ENCODE measurements at regions of chr10 and their contacts with region 1.

Region 1: GRCh38 chr10:49187950-49188761 is at the start of gene TMEM273:
- DNase-seq: peak in 1 of 2 donors; percentile 61
- ATAC-seq: peak; percentile 48 to 70 (median 67)
- H3K4me3 ChIP-seq: peak within 1 kb of the TSS; percentile 15
- H3K4me3 Mint-ChIP-seq: peak within 1 kb of the TSS; percentile 83
- H3K27ac ChIP-seq: peak within 1 kb of the TSS; percentile 44
- H3K27ac Mint-ChIP-seq: peak within 1 kb of the TSS; percentile 72 to 80
- H3K4me1 ChIP-seq: peaks cover 55% of the 10 kb centered on the region
- H3K4me1 Mint-ChIP-seq: peaks cover 70 to 75% of the 10 kb centered on the region in 2 donors
- H3K27me3 ChIP-seq: no peaks in the 10 kb centered on the region
- H3K27me3 Mint-ChIP-seq: no peaks in the 10 kb centered on the region
- CTCF ChIP-seq: no peak
- total RNA-seq, gene TMEM273: 11.6 to 46.3 (median 29.4) TPM

Region 2: GRCh38 chr10:49254556-49255318 is 66.6 kb after region 1 on chr10:
- intact Hi-C with region 1: loop called (anchors 5 kb)
- DNase-seq: peak; percentile 52 to 68
- ATAC-seq: peak; percentile 87 to 95 (median 94)
- H3K4me3 ChIP-seq: no peak overlapping the region
- H3K4me3 Mint-ChIP-seq: no peak overlapping the region
- H3K27ac ChIP-seq: peak overlapping the region; percentile 46
- H3K27ac Mint-ChIP-seq: no peak overlapping the region
- H3K4me1 ChIP-seq: peaks cover 39% of the 10 kb centered on the region
- H3K4me1 Mint-ChIP-seq: peaks cover 5 to 14% of the 10 kb centered on the region in 2 donors
- H3K27me3 ChIP-seq: no peaks in the 10 kb centered on the region
- H3K27me3 Mint-ChIP-seq: no peaks in the 10 kb centered on the region
- CTCF ChIP-seq: no peak

Region 3: DNA sequence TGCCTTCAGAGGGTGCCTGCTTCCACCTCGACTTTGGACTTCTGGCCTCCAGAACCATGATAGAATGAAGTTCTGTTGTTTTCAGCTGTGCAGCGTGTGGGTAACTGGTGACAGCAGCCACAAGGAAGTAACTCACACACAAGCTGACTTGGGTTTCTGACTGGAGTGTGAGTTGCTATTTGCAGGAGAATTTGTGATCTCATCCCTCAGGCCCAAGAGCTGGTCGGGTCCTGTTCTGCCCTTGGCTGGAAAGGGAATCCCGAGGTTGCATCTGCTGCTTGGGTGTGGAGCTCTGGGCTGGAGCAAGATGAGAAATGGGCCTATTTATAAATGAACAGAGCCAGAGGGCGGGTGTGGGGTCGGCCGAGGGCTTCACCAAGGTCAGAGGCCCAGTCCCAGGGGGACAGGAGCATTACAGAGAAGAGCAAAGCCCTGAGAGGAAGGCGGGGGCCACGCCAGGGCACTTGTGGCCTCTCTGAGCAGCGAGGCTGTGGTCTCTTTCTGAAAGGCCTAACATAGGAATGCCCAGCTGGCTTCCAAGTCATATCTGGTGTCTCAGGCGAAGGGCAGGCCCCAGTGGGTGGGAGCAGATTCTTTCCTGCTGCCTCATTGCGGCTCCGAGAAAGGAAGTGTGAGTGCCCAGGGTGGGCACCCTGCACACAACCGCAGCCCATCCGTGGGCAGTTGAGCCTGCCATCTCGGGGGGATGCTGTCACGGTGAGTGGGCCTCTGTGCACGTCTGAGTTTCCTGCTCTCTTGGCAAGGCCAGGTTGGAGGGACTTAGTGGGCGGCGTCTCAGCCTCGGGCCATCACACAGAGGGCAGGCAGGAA is 84.3 kb after region 1 on chr10:
- intact Hi-C with region 1: loop called (anchors 5 kb)
- DNase-seq: no peak
- ATAC-seq: peak; percentile 53 to 66 (median 64)
- H3K4me3 ChIP-seq: no peak overlapping the region
- H3K4me3 Mint-ChIP-seq: peak overlapping the region; percentile 74
- H3K27ac ChIP-seq: peak overlapping the region; percentile 66
- H3K27ac Mint-ChIP-seq: peak overlapping the region; percentile 93
- H3K4me1 ChIP-seq: peaks cover 34% of the 10 kb centered on the region
- H3K4me1 Mint-ChIP-seq: peaks cover 23 to 35% of the 10 kb centered on the region in 2 donors
- H3K27me3 ChIP-seq: no peaks in the 10 kb centered on the region
- H3K27me3 Mint-ChIP-seq: no peaks in the 10 kb centered on the region
- CTCF ChIP-seq: no peak

Region 4: DNA sequence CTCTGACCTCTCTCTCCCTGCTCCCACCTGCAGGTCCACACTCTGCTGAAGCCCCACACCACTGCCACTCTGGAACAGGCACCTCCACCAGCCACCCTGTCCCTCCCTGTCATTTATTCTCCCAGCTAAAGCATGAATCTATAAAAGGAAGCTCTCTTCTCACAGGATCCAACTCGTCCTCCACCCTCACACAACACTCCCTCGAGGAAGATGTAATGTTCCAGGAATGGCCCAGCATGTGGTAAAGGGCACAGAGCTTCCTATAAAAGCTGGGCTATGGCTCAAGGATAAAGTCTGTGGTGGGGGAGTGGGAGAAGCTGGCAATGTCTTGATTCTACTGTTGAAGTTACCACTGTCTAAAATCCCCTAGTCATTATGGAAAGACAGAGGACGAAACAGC is 283.4 kb after region 1 on chr10:
- intact Hi-C with region 1: no loop called
- DNase-seq: no peak
- ATAC-seq: no peak
- H3K4me3 ChIP-seq: no peak overlapping the region
- H3K4me3 Mint-ChIP-seq: no peak overlapping the region
- H3K27ac ChIP-seq: no peak overlapping the region
- H3K27ac Mint-ChIP-seq: peak overlapping the region in 1 of 2 donors; percentile 31
- H3K4me1 ChIP-seq: no peaks in the 10 kb centered on the region
- H3K4me1 Mint-ChIP-seq: no peaks in the 10 kb centered on the region
- H3K27me3 ChIP-seq: no peaks in the 10 kb centered on the region
- H3K27me3 Mint-ChIP-seq: no peaks in the 10 kb centered on the region
- CTCF ChIP-seq: no peak

Measured in natural killer cell (primary cell).